ENCODE measurements at regions of chr1 and their contacts with region 1.

Region 1: DNA sequence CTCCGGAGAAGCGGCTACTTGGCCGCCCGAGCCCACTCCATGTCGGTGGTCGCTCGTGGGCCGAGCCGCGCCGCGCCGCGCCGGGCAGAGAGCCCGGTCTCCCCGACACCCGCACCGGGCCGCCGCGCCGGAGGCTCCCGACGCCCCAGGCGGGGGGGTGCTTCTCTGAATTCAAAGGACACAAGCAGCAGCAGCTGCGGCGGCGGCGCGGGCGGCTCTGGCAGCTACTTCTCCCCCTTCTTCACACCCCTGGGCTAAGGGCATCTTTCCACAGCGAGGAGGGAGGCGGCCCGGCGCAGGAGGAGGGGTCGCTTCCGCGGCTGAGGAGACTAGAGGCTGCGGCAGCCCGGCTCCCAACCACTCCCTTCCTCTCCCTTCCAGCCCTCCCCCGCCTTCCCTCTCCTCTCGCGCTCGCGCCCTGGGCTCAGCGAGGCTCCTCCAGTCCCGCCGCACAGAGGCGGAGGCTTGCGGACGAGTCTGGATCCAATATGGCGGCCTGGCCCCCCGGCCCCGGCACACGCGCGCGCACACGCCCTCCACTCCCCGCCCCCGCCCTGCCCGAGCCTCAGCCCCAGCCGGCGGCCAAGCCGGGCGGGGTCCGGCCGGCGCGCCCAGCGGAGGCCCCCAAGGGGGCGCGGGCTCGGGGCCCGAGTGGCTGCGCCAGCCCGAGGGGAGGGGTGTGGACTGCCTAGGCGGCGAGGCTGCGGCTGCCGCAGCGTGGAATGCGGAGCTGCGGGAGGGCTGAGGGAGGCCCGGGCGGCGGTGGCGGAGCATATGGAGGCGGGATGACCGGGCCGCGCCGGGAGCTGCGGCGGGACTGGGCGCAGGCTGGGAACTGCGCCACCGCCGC is at the start of gene CDC42BPA:
- DNase-seq: peak; percentile 89

Region 2: DNA sequence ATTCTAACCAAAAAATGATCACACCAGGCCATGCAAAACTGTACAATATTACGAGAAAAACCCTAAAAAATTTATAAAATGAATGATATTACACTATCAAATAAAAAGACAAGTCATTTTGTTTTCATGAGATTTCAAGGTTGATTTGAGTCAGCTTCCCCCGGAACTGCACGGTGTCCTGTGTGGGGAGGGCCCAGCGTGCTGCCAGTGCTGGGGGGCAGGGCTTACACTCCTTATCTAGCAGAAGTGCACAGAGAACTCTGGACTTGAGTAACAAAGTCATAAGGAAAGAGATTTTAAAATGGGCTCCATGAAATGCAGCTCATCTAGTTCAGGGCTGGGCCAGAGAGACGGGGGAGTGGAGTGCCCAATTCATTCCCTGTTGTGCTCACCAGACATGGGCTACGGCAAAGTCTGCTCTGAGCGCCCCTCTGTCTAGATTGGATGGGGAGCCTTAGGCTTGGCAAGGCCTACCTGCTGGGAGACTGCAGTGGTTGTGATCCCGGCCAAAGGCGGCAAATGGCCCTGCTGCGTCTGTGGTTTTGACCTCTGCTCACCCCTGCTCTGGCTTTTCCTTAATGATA is 328.0 kb before region 1 on chr1:
- CTCF ChIA-PET with region 1: no interaction called
- POLR2A ChIA-PET with region 1: no interaction called
- DNase-seq: peak; percentile 17

Region 3: DNA sequence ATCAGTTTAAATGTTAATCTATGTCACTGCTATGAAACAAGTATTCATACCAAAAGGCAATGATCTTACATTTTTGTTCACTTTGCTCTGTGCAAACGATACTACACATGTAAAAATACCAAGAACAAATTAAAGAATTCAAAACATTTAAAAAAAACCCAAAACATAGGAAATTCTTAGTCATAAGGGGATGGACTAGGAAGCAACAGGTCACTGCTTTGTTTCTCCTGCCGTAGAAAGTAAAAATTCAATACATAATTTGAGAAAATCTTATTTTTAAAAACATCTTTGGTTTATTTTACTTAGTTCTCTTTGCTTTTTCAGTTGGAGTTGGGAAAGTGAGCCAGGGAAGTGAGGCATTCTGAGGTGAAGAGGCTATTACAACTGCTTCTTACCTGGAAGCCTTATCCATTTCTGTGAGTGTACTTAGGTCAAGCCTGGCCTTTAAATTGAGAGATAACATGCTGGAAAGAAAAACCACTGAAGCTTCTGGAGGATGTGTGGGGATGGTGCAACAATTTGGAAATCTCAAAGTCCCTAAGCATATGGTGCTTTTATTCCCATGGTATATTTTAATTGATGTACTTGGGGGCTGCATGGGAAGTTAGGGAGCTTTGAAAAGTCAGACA is 183.4 kb before region 1 on chr1:
- CTCF ChIA-PET with region 1: no interaction called
- POLR2A ChIA-PET with region 1: no interaction called
- DNase-seq: no peak

Region 4: GRCh38 chr1:227328405-227329019 is 10.3 kb after region 1 on chr1:
- CTCF ChIA-PET with region 1: interaction called, 3 read pairs
- POLR2A ChIA-PET with region 1: interaction called, 12 read pairs
- DNase-seq: no peak

Region 5: DNA sequence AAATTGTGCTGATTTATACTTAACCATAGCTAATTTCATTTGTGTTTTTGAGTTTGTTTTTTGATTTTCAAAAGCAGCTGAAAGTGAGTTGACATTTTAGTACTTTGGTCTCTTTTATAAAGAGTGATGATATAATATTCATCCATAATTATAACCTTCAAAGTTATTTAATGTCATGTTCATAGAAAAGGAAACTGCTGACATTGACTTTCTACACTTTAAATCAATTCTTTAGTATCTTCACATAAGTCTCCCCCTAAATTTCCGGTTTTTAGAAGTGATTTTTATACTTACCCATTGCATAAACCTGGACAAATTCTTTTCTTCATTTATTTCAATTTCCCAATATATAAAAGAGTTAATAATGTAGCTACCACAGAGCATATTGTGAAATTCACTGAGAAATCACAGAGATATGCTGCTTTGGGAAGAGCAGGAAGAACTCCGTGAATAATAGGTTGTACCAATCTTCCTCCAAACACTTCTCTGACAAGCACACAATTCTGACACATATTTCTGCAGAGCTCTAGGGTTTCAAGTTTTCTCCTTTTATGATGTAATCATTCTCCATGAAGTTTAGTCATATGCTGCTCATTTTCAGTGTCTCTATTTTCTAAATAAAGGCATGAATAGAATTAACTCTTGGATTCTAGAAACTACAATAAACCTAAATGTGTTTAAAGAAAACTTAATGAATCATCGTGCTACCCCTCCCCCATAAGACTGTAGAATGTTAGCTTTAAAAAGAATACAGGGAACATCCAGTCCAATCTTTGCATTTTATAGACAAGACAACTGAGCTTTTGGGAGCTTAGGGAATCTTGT is 25.7 kb after region 1 on chr1:
- CTCF ChIA-PET with region 1: no interaction called
- POLR2A ChIA-PET with region 1: interaction called, 10 read pairs
- DNase-seq: no peak

Measured in HEK293T (cell line).